ENCODE measurements at regions of chr3 and their contacts with region 1.

Region 1: GRCh38 chr3:141875374-141875892 is 1.0 kb upstream of the ATP1B3 start:
- DNase-seq: peak; percentile 86
- H3K4me3 Mint-ChIP-seq: peak overlapping the region; percentile 91
- H3K27ac Mint-ChIP-seq: peak overlapping the region; percentile 83
- H3K4me1 Mint-ChIP-seq: peaks cover 14% of the 10 kb centered on the region
- H3K27me3 Mint-ChIP-seq: no peaks in the 10 kb centered on the region
- CTCF ChIP-seq: peak; percentile 87

Region 2: GRCh38 chr3:140176526-140176925 is 1698.9 kb before region 1 on chr3:
- CTCF ChIA-PET with region 1: no interaction called
- POLR2A ChIA-PET with region 1: no interaction called
- intact Hi-C with region 1: no loop called
- DNase-seq: peak; percentile 19
- H3K4me3 Mint-ChIP-seq: no peak overlapping the region
- H3K27ac Mint-ChIP-seq: no peak overlapping the region
- H3K4me1 Mint-ChIP-seq: peaks cover 12% of the 10 kb centered on the region
- H3K27me3 Mint-ChIP-seq: no peaks in the 10 kb centered on the region
- CTCF ChIP-seq: no peak

Region 3: GRCh38 chr3:141738022-141738890 is 137.2 kb before region 1 on chr3 and contains the start of gene RNF7:
- CTCF ChIA-PET with region 1: interaction called, 45 read pairs
- POLR2A ChIA-PET with region 1: interaction called, 139 read pairs
- intact Hi-C with region 1: loop called (anchors 1 kb)
- DNase-seq: peak; percentile 96
- H3K4me3 Mint-ChIP-seq: peak within 1 kb of the TSS; percentile 90
- H3K27ac Mint-ChIP-seq: peak within 1 kb of the TSS; percentile 98
- H3K4me1 Mint-ChIP-seq: peaks cover 18% of the 10 kb centered on the region
- H3K27me3 Mint-ChIP-seq: peaks cover 10% of the 10 kb centered on the region
- CTCF ChIP-seq: peak; percentile 85
- total RNA-seq, gene RNF7: 96.1 and 112 TPM in 2 replicates

Region 4: DNA sequence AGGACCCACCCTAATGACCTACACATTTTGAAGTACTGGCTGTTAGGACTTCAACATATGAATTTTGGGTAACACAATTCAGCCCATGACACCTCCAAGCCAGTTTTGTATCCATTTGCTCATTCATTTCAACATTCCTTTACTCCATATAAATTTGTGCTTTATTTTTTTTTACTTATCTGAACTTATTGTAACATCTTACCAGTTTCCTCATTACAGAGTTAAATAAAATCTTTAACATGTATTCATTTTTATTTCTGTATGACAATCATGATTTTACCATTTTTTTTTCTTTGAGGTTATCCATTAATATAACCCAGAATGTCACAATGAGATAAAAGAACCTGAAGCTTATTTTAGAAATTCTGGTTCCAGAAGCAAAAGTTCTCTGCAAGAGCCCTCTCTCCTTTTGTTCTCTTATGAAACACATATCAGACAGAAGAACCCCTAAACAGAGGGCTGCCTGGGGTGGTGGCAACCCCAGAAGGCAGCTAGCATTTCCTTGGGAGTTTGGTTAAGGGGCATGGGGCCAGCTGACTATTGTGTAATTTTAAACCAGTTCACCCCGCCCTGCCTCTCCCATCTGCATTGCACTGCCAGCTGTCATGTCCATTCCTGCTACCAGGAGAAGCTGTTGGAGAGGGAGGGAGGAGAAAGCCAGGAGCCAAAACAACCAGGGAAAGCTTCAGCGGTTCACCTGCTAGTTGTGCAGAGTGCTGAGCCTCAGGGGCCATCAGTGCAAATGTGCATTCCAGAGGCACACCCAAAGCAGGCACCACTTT is 46.8 kb before region 1 on chr3:
- CTCF ChIA-PET with region 1: interaction called, 16 read pairs
- POLR2A ChIA-PET with region 1: interaction called, 147 read pairs
- intact Hi-C with region 1: loop called (anchors 1 kb)
- DNase-seq: peak; percentile 92
- H3K4me3 Mint-ChIP-seq: no peak overlapping the region
- H3K27ac Mint-ChIP-seq: peak overlapping the region; percentile 35
- H3K4me1 Mint-ChIP-seq: peaks cover 23% of the 10 kb centered on the region
- H3K27me3 Mint-ChIP-seq: no peaks in the 10 kb centered on the region
- CTCF ChIP-seq: no peak

Region 5: GRCh38 chr3:141853081-141853601 is 22.3 kb before region 1 on chr3:
- CTCF ChIA-PET with region 1: interaction called, 12 read pairs
- POLR2A ChIA-PET with region 1: interaction called, 4 read pairs
- intact Hi-C with region 1: no loop called
- DNase-seq: no peak
- H3K4me3 Mint-ChIP-seq: no peak overlapping the region
- H3K27ac Mint-ChIP-seq: no peak overlapping the region
- H3K4me1 Mint-ChIP-seq: peaks cover 8% of the 10 kb centered on the region
- H3K27me3 Mint-ChIP-seq: no peaks in the 10 kb centered on the region
- CTCF ChIP-seq: no peak

Region 6: DNA sequence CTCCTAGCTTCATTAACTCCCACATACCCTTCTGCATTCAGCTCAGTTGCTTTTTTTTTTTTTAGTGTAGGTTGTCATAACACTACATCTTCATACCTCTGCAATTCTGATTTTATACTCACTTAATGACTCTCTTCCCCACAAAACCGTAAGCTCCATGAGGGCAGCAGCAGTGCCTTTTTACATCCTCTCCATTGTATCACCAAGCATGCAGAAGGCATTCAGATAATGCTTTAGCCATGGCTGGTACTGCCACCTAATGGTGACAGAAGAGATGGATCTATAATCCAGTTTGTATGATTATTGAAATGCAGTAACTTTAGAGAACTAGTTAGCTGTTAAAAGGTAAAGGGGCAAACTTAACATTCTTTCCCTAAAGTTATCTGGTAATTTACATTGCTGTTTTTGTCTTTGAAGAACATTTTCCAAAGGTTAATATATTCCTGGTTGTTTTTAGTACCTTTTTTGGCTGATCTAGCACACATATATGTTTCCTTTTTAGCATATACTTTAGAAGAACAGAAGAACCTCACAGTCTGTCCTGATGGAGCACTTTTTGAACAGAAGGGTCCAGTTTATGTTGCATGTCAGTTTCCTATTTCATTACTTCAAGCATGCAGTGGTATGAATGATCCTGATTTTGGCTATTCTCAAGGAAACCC is 37.8 kb after region 1 on chr3:
- CTCF ChIA-PET with region 1: interaction called, 9 read pairs
- POLR2A ChIA-PET with region 1: interaction called, 4 read pairs
- intact Hi-C with region 1: loop called (anchors 1 kb)
- DNase-seq: peak; percentile 74
- H3K4me3 Mint-ChIP-seq: no peak overlapping the region
- H3K27ac Mint-ChIP-seq: no peak overlapping the region
- H3K4me1 Mint-ChIP-seq: peaks cover 13% of the 10 kb centered on the region
- H3K27me3 Mint-ChIP-seq: no peaks in the 10 kb centered on the region
- CTCF ChIP-seq: peak; percentile 53

Region 7: GRCh38 chr3:142356818-142357217 is 481.4 kb after region 1 on chr3:
- CTCF ChIA-PET with region 1: no interaction called
- POLR2A ChIA-PET with region 1: no interaction called
- intact Hi-C with region 1: no loop called
- DNase-seq: no peak
- H3K4me3 Mint-ChIP-seq: no peak overlapping the region
- H3K27ac Mint-ChIP-seq: no peak overlapping the region
- H3K4me1 Mint-ChIP-seq: no peaks in the 10 kb centered on the region
- H3K27me3 Mint-ChIP-seq: no peaks in the 10 kb centered on the region
- CTCF ChIP-seq: no peak